ENCODE measurements at regions of chr14 and their contacts with region 1.

Region 1: DNA sequence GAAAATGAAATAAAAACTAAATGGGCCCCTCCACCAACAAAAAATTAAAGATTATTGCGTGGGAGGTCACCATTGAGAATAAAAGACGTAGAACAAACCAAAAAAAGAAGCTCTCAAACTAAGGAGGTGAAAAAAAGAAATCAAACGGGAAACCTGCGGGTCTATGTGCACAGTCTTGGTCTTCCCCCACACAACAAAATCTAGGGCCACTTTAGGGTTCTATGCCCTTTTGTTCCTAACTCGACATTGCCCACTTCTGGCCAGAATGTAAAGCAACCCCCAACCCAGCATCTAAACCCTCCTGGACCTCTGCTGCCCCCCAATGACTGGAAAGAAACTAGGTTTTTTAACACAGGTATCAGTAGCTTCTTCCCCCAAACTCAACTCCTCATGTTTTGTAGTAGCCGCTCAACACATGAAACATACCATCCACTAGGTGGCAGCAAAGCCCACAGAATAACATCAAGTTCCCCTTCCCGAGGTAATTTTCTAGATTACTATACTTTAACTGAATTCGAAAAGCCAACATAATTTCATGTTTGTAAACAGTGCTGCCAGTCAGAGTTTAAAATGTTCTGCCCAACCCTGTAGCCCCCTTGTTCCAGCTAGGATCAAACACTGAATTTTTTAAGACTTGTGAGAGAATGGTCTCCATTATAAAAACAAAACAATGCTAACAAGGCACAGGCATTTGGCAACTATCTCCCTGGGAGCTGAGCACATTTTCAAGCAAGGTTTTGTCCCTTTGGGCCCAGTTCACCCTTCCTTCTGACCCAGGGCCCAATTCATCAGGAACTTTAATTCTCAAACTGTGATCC is 18.7 kb downstream of the DAD1 start:
- DNase-seq: peak; percentile 87
- H3K4me3 Mint-ChIP-seq: peak overlapping the region; percentile 89
- H3K27ac Mint-ChIP-seq: peak overlapping the region; percentile 96
- H3K4me1 Mint-ChIP-seq: peaks cover 70% of the 10 kb centered on the region
- H3K27me3 Mint-ChIP-seq: no peaks in the 10 kb centered on the region

Region 2: GRCh38 chr14:22531451-22532344 is 38.6 kb before region 1 on chr14:
- intact Hi-C with region 1: loop called (anchors 5 kb)
- DNase-seq: no peak
- H3K4me3 Mint-ChIP-seq: peak overlapping the region; percentile 76
- H3K27ac Mint-ChIP-seq: peak overlapping the region; percentile 88
- H3K4me1 Mint-ChIP-seq: peaks cover 87% of the 10 kb centered on the region
- H3K27me3 Mint-ChIP-seq: no peaks in the 10 kb centered on the region

Region 3: GRCh38 chr14:22653012-22653621 is 82.8 kb after region 1 on chr14:
- intact Hi-C with region 1: loop called (anchors 1 kb)
- DNase-seq: peak; percentile 40
- H3K4me3 Mint-ChIP-seq: no peak overlapping the region
- H3K27ac Mint-ChIP-seq: no peak overlapping the region
- H3K4me1 Mint-ChIP-seq: peaks cover 2% of the 10 kb centered on the region
- H3K27me3 Mint-ChIP-seq: no peaks in the 10 kb centered on the region

Region 4: GRCh38 chr14:22822571-22823098 is 252.3 kb after region 1 on chr14:
- intact Hi-C with region 1: loop called (anchors 5 kb)
- DNase-seq: peak; percentile 47
- H3K4me3 Mint-ChIP-seq: peak overlapping the region; percentile 62
- H3K27ac Mint-ChIP-seq: no peak overlapping the region
- H3K4me1 Mint-ChIP-seq: peaks cover 24% of the 10 kb centered on the region
- H3K27me3 Mint-ChIP-seq: peaks cover 19% of the 10 kb centered on the region

Region 5: DNA sequence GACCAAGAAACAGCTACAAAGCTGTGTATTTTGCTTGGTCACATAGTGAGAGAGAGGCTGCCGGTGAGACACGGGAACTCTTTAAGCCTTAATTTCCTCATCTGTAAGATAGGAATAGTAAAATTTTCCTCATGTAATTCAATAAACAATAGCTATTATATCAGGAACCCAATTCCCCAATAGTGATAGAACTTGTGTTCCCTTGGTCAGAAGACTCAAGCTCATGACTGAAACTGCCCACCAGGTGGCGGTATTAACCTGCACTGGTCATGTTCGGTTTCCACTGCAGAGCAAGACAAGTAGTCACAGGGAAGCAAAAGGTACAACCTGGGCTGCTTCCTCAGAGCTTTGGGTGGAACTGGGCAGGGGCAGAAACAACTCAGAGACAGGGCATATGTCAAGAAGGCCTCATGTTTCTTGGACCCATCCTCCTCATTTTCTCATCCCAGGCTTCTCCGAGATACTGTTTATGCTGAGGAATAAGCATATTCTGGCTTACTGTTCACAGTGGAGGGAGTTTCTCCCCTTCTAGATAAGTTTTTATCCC is 416.2 kb after region 1 on chr14:
- intact Hi-C with region 1: loop called (anchors 2 kb)
- DNase-seq: peak; percentile 78
- H3K4me3 Mint-ChIP-seq: no peak overlapping the region
- H3K27ac Mint-ChIP-seq: no peak overlapping the region
- H3K4me1 Mint-ChIP-seq: no peaks in the 10 kb centered on the region
- H3K27me3 Mint-ChIP-seq: no peaks in the 10 kb centered on the region